Activated T-helper 2 cell treated with anti-CD3 and anti-CD28 coated beads, Interferon-gamma antibody, Interleukin-2, Interleukin-4, amounts not matched to agents 10 μg/mL and 5 μg/mL and 100 μg/mL, durations not matched to agents 14 hours and 24 hours and 36 hours (primary cell): ENCODE measurements at regions of chr12 and their contacts with region 1.

Region 1: DNA sequence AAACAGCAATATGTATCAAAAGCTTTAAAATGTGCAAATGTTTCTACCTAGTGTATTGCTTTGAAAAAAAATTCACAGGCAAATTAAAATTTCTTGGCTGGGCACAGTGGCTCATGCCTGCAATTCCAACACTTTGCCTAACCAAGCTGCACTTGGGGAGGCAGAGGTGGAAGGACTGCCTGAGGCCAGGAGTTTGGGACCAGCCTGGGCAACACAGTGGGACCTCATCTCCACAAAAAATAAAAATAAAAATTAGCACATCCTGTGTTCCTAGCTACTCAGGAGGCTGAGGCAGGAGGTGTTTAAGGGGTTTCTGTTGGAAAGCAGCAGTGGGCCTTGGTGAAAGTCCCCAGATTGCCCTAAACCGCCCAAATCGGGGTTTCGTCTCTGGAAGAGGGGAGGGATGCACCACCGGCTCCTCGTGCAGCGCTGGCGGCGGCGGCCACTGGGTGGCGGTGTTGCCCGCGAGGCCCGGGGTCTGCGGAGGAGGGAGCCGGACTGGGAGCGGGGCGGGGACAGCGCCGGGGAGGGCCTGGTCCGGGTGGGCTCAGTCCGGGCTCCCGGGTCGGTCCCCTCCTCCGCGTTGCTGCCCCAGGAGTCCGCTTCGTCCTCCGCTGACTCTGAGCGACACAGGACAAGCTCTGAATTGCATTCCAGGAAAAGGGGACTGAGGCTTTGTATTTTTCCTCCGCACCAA is 265.6 kb downstream of the AACS start:
- DNase-seq: peak; percentile 36
- H3K4me3 Mint-ChIP-seq: no peak overlapping the region
- H3K27ac Mint-ChIP-seq: no peak overlapping the region
- H3K4me1 Mint-ChIP-seq: no peaks in the 10 kb centered on the region
- H3K27me3 Mint-ChIP-seq: peaks cover 8% of the 10 kb centered on the region

Region 2: DNA sequence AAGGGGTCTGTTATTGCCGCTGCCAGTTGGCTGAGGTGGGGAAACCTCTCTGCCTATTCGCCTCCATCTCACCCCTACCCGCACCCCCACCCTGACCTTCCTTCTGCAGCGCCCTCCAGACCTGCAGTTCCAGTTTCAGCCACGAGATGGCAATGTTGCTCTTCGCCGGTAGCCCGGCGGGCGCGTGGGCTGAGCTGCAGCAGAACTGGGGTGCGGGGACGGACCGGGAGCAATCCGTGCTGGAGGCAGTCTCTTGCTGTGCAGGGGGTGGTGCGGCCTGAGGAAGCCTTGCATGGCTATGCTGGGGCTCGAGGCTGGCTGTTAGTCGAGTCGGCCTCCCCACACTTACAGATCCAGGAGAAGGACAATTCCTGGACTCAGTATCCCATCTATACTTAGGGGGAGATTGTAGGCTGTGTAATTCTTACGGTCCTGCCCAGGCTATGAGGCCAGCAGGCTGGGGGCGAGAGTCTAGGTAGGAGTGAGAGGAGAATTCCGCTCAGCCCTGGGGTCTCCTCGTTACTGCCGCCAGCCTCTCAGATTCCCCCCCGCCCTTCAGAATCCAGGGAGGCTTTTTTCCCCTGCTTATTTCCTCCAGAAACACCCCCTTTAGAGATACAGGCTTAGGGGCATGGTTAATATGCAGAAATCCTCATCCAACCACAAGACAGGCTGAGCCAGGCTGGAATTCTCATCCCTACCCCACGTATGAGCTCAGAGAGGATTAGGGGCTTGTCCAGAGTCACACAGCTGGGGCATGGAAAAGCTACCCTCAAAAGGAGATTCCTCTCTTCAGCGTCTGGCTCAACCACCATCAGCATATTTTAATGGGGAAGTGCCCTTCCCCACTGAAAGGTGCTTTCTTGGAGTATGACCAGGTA is 147.4 kb before region 1 on chr12:
- intact Hi-C with region 1: loop called (anchors 5 kb)
- DNase-seq: peak; percentile 72
- H3K4me3 Mint-ChIP-seq: no peak overlapping the region
- H3K27ac Mint-ChIP-seq: no peak overlapping the region
- H3K4me1 Mint-ChIP-seq: peaks cover 3% of the 10 kb centered on the region
- H3K27me3 Mint-ChIP-seq: peaks cover 48% of the 10 kb centered on the region

Region 3: DNA sequence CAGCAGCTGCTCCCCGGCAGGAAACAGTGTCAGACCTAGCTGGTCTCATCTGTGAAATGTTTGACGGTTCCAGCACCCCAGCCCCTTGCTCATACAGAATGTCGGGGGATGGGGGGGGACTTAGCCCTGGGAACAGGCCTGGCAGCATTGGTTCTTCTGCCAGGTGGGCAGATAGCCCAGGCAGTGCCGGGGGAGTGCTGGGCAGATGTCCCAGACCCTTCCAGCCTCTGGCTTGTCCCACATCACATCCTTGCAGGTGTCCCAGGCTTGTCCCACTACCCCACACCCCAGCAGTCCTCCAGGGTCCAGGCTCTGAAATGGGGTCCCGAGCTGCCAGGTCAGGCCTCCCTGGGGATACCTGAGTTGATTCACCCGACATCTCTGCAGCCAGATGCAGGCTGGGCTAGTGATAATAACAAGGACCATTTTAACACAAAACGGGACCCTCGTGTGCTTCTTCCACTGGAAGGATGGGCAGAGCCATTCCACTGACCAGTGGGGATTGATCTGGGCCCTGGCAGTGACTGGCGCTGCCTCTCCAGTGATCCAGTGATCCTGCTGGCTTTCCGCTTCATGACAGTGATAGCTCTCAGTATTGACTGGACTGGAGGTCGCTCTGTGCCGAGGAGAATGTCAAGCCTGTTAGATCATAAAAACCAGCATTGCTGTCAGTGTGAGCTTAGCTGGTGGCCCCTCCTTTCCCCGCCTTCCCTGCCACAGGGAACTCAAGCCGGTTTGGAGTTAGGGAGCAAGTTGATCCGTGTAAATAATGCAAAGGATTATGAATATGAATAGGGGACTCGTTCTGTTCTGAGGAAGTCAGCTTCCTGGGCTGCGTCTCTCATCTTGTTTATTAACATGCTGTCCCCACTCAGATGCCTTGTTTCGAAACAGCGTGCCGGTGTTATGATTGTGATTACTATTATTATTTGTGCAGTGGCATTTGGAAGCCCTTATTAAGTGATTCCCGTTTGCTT is 84.9 kb before region 1 on chr12:
- intact Hi-C with region 1: no loop called
- DNase-seq: no peak
- H3K4me3 Mint-ChIP-seq: no peak overlapping the region
- H3K27ac Mint-ChIP-seq: no peak overlapping the region
- H3K4me1 Mint-ChIP-seq: no peaks in the 10 kb centered on the region
- H3K27me3 Mint-ChIP-seq: peaks cover 3% of the 10 kb centered on the region

Region 4: GRCh38 chr12:125346362-125346761 is 15.6 kb after region 1 on chr12:
- intact Hi-C with region 1: no loop called
- DNase-seq: no peak
- H3K4me3 Mint-ChIP-seq: no peak overlapping the region
- H3K27ac Mint-ChIP-seq: no peak overlapping the region
- H3K4me1 Mint-ChIP-seq: peaks cover 8% of the 10 kb centered on the region
- H3K27me3 Mint-ChIP-seq: peaks cover 15% of the 10 kb centered on the region